Activated naive CD4-positive, alpha-beta T cell treated with anti-CD3 and anti-CD28 coated beads for 36 hours (primary cell): ENCODE measurements at regions of chr1 and their contacts with region 1.

Region 1: GRCh38 chr1:200620273-200621131 is at the start of gene KIF14:
- DNase-seq: peak; percentile 95
- H3K4me3 Mint-ChIP-seq: peak within 1 kb of the TSS; percentile 92
- H3K27ac Mint-ChIP-seq: peak within 1 kb of the TSS; percentile 66
- H3K4me1 Mint-ChIP-seq: peaks cover 16% of the 10 kb centered on the region
- H3K27me3 Mint-ChIP-seq: peaks cover 2% of the 10 kb centered on the region
- total RNA-seq, gene KIF14: 16.4 to 16.9 TPM

Region 2: GRCh38 chr1:200558866-200559459 is 61.5 kb before region 1 on chr1:
- CTCF ChIA-PET with region 1: interaction called, 11 read pairs
- intact Hi-C with region 1: loop called (anchors 1 kb)
- DNase-seq: peak; percentile 44
- H3K4me3 Mint-ChIP-seq: no peak overlapping the region
- H3K27ac Mint-ChIP-seq: no peak overlapping the region
- H3K4me1 Mint-ChIP-seq: peaks cover 11% of the 10 kb centered on the region
- H3K27me3 Mint-ChIP-seq: no peaks in the 10 kb centered on the region

Region 3: DNA sequence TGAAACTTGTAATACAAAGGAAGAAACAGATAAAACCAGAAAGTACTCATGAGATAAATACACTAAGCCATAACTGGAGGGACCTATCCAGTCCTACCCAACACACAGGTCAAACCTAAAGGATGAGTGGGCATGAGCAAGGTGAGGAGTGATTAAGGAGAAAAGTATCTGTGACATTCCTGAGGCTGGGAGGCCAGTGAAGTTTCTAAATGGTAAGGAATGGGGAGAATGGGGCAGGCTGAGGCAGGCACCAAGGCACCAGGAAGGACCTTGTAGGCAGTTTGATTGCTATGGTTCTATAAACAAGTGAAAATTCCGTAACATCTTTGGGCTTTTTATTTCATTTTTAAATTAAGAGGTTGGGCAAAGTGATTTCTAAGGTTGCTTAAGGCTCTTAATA is 38.8 kb after region 1 on chr1:
- CTCF ChIA-PET with region 1: interaction called, 10 read pairs
- intact Hi-C with region 1: no loop called
- DNase-seq: no peak
- H3K4me3 Mint-ChIP-seq: no peak overlapping the region
- H3K27ac Mint-ChIP-seq: no peak overlapping the region
- H3K4me1 Mint-ChIP-seq: peaks cover 22% of the 10 kb centered on the region
- H3K27me3 Mint-ChIP-seq: no peaks in the 10 kb centered on the region

Region 4: GRCh38 chr1:200738740-200739498 is 118.4 kb after region 1 on chr1 and contains the start of gene CAMSAP2:
- CTCF ChIA-PET with region 1: interaction called, 4 read pairs
- intact Hi-C with region 1: loop called (anchors 1 kb)
- DNase-seq: peak; percentile 69
- H3K4me3 Mint-ChIP-seq: peak within 1 kb of the TSS; percentile 98
- H3K27ac Mint-ChIP-seq: peak within 1 kb of the TSS; percentile 89
- H3K4me1 Mint-ChIP-seq: peaks cover 26% of the 10 kb centered on the region
- H3K27me3 Mint-ChIP-seq: no peaks in the 10 kb centered on the region
- total RNA-seq, gene CAMSAP2: 3.9 to 6.5 TPM

Region 5: GRCh38 chr1:200808846-200809245 is 188.3 kb after region 1 on chr1:
- CTCF ChIA-PET with region 1: interaction called, 97 read pairs
- intact Hi-C with region 1: no loop called
- DNase-seq: no peak
- H3K4me3 Mint-ChIP-seq: no peak overlapping the region
- H3K27ac Mint-ChIP-seq: no peak overlapping the region
- H3K4me1 Mint-ChIP-seq: no peaks in the 10 kb centered on the region
- H3K27me3 Mint-ChIP-seq: no peaks in the 10 kb centered on the region

Region 6: DNA sequence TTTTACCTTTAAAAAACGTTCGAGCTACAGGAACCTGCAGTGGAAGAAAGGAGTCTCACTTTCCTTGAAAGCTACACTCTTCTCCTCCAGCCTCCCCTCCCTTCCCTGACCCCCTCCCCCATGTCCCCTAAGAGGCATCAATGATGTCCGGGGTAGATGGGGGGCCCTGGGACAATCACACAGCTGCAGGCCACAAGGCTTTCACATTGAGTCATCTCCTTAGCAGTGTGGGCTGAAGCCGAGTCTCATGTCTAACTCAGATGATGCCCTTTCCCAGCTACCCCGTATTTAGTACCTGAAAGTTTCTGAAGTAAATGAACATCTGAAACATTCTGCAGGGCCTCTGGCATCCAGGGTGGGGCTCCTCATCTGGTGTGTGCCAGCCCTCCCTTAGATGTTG is 246.0 kb after region 1 on chr1:
- CTCF ChIA-PET with region 1: no interaction called
- intact Hi-C with region 1: loop called (anchors 10 kb)
- DNase-seq: peak; percentile 71
- H3K4me3 Mint-ChIP-seq: no peak overlapping the region
- H3K27ac Mint-ChIP-seq: no peak overlapping the region
- H3K4me1 Mint-ChIP-seq: peaks cover 40% of the 10 kb centered on the region
- H3K27me3 Mint-ChIP-seq: peaks cover 12% of the 10 kb centered on the region

Region 7: DNA sequence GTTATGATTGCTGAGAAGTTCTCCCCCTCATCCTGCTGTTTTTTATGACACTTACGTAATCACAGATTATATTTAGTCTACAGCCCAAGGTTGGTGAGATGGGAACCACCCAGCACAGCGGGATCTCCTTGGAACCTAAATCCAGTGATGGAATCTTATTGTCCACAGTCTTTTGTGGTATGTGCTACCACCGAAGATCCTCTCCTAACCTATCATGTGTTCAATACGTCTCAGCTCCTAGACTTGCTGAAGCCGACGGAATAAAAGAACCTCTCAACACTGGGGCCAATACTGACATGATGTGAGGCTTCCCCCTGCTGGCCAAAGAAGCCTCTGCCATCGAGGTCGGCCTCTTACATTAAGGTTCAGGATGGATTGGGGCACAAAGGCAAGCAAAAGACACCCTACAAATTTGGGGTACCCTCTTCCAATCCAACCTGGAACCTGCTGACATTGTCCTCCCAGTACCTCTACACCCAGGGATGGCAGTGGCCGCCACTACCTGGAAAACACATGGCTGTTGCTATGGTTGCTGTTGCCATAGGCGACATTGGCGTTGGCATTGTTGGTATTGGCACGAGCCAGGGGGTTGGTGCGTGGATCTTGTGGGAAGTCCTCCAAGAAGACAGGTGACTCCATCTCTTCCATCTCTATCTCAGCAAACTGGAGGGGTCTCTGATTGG is 422.4 kb after region 1 on chr1:
- CTCF ChIA-PET with region 1: interaction called, 3 read pairs
- intact Hi-C with region 1: loop called (anchors 1 kb)
- DNase-seq: peak; percentile 83
- H3K4me3 Mint-ChIP-seq: no peak overlapping the region
- H3K27ac Mint-ChIP-seq: no peak overlapping the region
- H3K4me1 Mint-ChIP-seq: no peaks in the 10 kb centered on the region
- H3K27me3 Mint-ChIP-seq: no peaks in the 10 kb centered on the region

Region 8: DNA sequence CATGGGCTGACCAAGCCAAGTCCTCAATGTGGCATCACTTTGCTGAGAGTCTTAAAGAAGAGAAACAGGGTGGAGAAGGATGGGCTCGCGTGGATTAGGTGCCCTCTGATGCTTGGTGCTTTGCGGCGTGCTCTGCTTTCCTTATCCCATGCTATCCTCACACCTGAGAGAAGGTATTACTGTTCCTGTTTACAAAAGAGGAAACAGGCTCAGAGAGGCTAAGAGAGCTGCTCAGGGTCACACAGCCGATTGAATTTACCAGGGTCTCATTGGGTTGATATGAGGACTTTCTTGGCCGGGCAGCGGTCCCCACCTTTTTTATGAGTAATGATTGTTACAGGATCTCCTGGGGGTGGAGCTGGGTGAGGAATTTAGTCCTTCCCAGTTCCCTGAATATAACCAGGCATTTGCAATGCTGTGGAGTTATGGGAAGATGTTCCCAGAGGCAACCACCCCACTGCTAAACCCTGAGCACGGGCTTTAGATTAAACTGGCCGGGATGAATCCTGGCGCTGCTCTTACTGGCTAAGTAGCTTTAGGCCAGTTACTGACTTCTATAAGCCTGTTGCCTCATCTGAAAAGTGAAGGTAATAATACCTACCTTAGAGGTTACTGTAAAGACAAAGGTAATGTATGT is 501.9 kb after region 1 on chr1:
- CTCF ChIA-PET with region 1: no interaction called
- intact Hi-C with region 1: no loop called
- DNase-seq: no peak
- H3K4me3 Mint-ChIP-seq: no peak overlapping the region
- H3K27ac Mint-ChIP-seq: no peak overlapping the region
- H3K4me1 Mint-ChIP-seq: peaks cover 2% of the 10 kb centered on the region
- H3K27me3 Mint-ChIP-seq: peaks cover 6% of the 10 kb centered on the region